ENCODE measurements at regions of chr1 and their contacts with region 1.

Region 1: DNA sequence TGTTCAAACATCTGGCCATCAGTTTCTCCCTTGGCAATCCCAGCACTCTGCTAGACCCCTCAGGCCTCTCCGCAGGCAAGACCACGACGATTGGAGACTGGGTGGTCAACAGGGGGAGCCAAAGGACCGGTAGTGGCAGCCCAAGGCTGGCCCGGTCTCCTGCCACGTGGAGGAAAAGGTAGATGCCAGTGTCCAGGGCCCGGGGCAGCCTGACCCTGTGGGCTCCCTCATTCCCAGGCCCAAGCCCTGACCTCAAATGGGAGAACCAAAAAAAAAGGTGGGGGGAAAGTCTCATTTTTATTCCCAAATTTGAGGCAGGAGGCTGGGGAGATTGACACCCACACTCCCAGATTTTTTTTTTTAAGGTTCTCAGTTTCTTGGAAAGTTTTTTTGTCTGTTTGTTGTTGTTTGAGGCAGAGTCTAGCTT is 24.8 kb downstream of the S100A6 start:
- DNase-seq: peak; percentile 77
- H3K4me3 ChIP-seq: no peak overlapping the region
- H3K27ac ChIP-seq: no peak overlapping the region
- H3K4me1 ChIP-seq: no peaks in the 10 kb centered on the region
- CTCF ChIP-seq: peak; percentile 96

Region 2: GRCh38 chr1:153441238-153441933 is 69.6 kb before region 1 on chr1:
- CTCF ChIA-PET with region 1: no interaction called
- POLR2A ChIA-PET with region 1: no interaction called
- intact Hi-C with region 1: no loop called
- DNase-seq: no peak
- H3K4me3 ChIP-seq: no peak overlapping the region
- H3K27ac ChIP-seq: no peak overlapping the region
- H3K4me1 ChIP-seq: no peaks in the 10 kb centered on the region
- CTCF ChIP-seq: no peak

Region 3: DNA sequence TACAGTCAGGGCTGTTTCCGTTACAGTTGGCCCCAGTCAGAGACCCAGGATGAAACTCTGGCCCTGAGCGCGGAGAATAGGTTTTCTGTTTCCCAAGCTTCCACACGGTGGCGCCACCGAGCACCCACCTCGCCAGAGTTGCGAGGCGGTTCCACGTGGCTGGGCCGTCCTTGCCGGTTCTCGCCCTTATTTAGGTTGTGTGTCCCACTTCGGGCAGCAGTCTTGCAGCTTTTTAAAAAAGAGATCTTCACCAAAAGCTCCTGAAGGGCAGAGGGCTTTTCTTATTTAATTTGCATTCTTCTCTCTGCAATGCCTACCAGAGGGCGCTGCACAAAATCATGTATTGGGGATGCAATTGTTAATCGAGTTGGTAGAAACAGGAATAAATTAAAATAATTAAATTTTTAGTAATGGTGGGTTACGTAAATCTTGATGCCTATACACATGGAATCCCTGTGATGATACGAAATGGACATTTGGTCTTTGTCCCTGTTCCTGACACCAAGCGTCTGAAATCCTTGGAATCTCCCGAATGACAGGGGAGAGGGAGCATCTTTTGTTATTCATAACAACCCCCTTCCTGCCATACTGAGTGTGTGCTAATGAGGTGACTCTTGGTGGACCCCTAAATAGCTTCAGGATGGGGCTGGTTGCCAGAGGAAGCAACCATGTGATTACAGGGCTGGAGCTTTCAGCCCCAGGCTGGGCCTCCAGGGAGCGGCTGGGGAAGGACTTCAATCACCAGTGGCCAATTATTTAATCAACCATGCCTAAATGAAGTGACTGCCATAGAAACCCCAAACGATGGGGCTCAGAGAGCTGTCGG is 45.0 kb before region 1 on chr1:
- CTCF ChIA-PET with region 1: no interaction called
- POLR2A ChIA-PET with region 1: no interaction called
- intact Hi-C with region 1: no loop called
- DNase-seq: peak; percentile 48
- H3K4me3 ChIP-seq: no peak overlapping the region
- H3K27ac ChIP-seq: no peak overlapping the region
- H3K4me1 ChIP-seq: no peaks in the 10 kb centered on the region
- CTCF ChIP-seq: peak; percentile 91

Region 4: DNA sequence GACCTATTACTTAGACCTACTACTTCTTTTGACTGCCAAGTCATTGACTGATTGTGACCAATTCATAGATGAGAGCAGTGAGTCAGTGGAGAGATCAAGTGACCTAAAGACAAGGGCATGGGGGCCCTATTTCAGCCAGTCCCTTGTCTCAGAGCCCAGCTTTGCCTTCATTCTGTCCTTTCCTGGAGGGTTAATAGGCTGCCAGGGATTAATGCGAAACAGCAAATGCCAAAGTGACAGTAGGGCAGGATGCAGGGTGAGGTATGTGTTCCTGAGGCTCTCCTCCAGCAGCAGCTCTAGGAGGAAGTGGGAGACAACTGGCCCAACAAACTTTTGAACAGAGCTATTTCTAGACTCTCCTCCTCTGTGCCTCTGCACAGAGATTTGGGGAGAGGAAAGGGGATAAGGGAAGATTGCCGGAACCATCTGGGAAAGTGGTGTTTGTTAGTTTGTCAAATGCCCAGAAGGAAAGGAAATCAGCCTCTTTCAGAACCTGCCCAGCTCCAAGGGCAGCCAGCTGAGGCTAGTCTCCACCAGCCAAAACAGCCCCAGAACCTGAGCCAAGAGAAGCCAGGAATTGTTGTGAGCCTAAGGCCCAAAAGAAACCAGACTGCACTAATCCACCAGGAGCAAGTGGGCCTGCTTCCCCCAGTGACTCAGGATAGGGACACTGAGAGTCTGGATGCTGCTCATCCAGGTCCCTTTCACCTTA is 43.0 kb after region 1 on chr1:
- CTCF ChIA-PET with region 1: no interaction called
- POLR2A ChIA-PET with region 1: no interaction called
- intact Hi-C with region 1: no loop called
- DNase-seq: no peak
- H3K4me3 ChIP-seq: no peak overlapping the region
- H3K27ac ChIP-seq: no peak overlapping the region
- H3K4me1 ChIP-seq: no peaks in the 10 kb centered on the region
- CTCF ChIP-seq: no peak

Region 5: DNA sequence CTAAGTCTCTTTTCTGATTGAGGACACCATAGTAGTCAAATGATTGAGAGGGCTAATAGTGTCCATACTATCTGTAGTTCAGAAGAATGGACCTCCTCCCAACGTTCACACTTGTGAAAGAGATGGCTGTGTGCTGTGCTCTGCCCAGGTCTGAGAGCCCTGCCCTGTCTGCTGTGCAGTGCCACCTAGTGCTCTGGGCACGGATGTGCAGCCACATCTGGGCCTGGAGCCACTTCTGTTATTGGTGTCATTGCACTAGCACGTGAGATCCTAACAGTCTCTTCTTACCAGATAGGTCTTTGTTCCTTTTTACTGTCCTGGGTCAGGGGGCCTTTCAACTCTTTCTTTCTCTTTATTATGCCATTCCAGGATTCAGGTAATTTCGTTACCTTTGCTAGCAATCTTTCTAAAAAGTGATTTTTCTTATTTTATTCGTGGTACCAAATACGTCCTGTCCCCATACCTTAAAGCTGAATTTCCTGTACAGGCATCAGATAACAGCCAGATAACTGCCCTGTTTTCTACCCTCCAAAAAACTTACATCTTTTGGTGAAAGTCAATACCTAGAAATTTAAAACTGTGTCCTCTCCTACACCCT is 238.5 kb after region 1 on chr1:
- CTCF ChIA-PET with region 1: no interaction called
- POLR2A ChIA-PET with region 1: no interaction called
- intact Hi-C with region 1: loop called (anchors 1 kb)
- DNase-seq: peak; percentile 82
- H3K4me3 ChIP-seq: no peak overlapping the region
- H3K27ac ChIP-seq: no peak overlapping the region
- H3K4me1 ChIP-seq: no peaks in the 10 kb centered on the region
- CTCF ChIP-seq: peak; percentile 96

Measured in OCI-LY7 (cell line).